ENCODE measurements at regions of chr2 and their contacts with region 1.

Region 1: GRCh38 chr2:209556354-209556961 is 132.6 kb downstream of the MAP2 start:
- DNase-seq: no peak
- ATAC-seq: peak; percentile 46 to 85
- H3K4me3 ChIP-seq: no peak overlapping the region
- H3K27ac ChIP-seq: no peak overlapping the region
- H3K4me1 ChIP-seq: no peaks in the 10 kb centered on the region
- H3K27me3 ChIP-seq: no peaks in the 10 kb centered on the region
- CTCF ChIP-seq: peak; percentile 49

Region 2: DNA sequence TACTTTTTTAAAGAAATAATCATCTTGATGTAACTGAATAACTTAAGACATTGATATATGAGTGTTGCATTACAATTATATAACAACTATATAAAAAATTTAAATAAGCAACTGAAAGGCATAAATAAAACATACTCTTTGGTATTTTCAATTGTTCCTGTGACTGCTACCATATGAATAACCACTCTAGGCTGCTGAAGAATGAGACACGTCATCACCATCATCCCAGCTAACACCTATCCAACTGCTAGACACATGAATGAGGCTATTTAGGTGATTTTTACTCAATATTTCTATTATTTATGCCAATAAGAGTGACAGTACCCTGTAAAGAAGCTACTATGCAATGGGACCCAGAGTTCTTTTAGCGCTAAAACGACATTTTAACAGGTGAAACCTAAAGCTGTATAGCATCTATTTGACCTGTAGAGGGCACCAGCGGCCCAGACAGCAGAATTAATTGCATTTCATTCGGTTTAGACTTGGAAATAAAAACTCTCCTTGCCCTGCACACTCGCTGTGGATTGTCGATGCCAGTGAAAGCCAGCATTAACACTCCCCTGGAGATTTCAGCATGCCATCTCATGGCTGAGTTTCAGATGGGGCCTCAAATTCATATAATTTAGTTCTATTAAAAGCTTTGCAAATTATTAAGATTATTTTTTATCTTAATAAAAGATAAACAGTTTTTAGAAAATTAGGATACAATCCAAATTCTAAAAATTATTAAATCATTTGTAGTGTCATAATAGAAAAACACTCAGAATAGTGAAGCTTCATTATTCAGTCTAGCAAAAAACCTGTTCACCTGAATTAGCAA is 222.1 kb before region 1 on chr2:
- intact Hi-C with region 1: loop called (anchors 10 kb)
- DNase-seq: peak; percentile 49
- ATAC-seq: peak; percentile 76 to 86
- H3K4me3 ChIP-seq: no peak overlapping the region
- H3K27ac ChIP-seq: no peak overlapping the region
- H3K4me1 ChIP-seq: no peaks in the 10 kb centered on the region
- H3K27me3 ChIP-seq: no peaks in the 10 kb centered on the region
- CTCF ChIP-seq: peak; percentile 90

Region 3: DNA sequence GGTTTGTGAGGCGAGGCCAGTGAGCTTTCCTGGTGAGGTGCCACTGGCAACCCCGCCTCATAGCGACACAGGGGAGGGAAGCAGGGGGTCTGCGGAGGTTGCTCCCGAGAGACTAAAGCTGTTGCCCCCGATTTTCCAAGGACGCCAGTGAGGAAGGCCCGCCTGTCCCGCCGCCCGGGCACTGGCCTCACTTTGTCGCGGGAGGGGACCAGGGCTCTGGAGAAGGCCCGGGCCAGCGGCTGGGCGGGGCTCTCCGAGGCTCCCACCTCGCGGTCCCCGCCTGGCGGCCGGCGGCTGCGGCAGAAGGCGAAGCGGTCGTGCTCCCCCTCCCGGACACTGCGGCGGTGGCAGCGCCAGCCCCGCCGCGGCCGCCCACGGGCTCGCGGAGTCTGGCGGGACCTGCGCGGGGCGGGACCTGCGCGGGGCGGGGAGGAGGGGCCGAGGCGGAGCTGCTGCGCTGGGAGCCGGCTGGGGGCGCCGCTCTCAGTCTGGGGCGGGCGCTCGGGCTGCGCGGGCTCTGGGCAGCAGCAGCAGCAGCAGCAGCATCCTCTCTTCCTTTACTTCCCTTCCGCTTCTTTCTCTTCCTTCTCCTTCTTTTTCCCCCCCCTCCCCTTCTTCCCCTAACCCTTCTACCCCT is 132.8 kb before region 1 on chr2 and contains the start of gene MAP2:
- intact Hi-C with region 1: loop called (anchors 10 kb)
- DNase-seq: peak; percentile 89
- ATAC-seq: peak; percentile 96 to 99
- H3K4me3 ChIP-seq: peak within 1 kb of the TSS; percentile 62
- H3K27ac ChIP-seq: peak within 1 kb of the TSS; percentile 47
- H3K4me1 ChIP-seq: peaks cover 17% of the 10 kb centered on the region
- H3K27me3 ChIP-seq: no peaks in the 10 kb centered on the region
- CTCF ChIP-seq: peak; percentile 80
- total RNA-seq, gene MAP2: 22.6 TPM

Region 4: DNA sequence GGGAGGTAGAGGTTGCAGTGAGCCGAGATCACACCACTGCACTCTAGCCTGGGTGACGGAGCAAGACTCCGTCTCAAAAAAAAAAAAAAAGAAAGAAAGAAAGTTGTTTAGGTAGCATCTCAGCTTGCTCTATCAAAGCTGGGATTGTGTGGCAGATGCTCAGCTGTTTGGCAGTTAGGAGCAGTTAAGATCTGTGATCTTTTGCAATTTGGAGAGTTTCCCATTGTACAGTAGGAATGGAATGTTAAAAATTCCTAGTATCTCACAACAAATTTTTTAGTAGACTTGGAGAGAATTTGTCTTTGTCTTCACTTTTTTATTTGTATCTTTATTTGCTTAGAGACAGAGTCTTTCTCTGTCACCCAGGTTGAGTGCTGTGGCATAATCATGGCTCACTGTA is 92.3 kb after region 1 on chr2:
- intact Hi-C with region 1: no loop called
- DNase-seq: no peak
- ATAC-seq: no peak
- H3K4me3 ChIP-seq: no peak overlapping the region
- H3K27ac ChIP-seq: no peak overlapping the region
- H3K4me1 ChIP-seq: no peaks in the 10 kb centered on the region
- H3K27me3 ChIP-seq: no peaks in the 10 kb centered on the region
- CTCF ChIP-seq: no peak

Measured in lower lobe of right lung (tissue), 2 donors.